ENCODE measurements at regions of chr12 and their contacts with region 1.

Region 1: GRCh38 chr12:67269632-67270573 is 745 bp downstream of the CAND1 start:
- DNase-seq: no peak
- H3K4me3 ChIP-seq: peak overlapping the region; percentile 90
- CTCF ChIP-seq: peak; percentile 0

Region 2: DNA sequence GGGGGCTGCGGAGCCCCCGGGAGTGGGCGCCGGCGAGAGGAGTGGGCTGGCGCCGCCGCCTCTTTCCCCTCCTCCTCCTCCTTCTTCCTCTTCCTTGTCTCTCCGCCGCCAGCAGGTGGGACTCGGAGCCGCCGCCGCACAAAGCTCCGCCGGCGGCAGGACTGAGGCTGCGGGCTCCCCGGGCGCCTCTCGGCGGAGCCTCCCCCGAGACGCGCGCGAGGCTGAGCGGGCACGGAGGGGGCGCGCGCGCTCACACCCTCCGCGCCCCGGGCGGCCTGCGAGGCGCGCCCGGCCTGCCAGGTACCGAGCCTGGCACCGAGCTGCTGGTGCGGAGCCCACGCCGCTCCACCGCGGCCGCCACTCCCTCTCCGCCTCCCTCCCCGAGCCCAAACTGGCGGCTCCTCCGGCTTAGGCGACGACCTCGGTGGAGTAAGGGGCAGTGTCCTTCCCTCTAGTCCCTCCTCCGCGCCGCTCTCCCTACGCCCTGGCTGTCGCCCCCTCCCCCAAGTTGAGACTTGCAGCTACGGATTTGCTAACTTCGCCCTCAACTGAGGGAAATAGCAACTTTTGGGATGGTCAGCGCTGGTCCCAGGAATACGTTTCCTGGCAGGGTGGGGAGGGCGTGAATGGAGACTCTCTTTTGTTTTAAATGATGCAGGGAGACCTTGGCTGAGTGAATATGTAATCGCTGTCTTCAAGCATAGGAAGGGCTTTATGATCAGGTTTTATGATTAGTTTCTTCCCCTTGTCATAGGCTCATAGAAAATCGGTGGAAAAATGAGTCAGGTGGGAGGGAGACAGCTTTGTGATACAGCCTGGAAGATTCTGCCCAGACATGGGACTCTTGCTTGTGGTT is 200.2 kb before region 1 on chr12:
- in situ Hi-C with region 1: loop called (anchors 10 kb)
- DNase-seq: no peak
- H3K4me3 ChIP-seq: peak overlapping the region; percentile 50
- CTCF ChIP-seq: no peak

Measured in astrocyte of the cerebellum (primary cell).